ENCODE measurements at regions of chr12 and their contacts with region 1.

Region 1: GRCh38 chr12:108731105-108731865 is at the start of gene CORO1C:
- H3K4me3 Mint-ChIP-seq: peak within 1 kb of the TSS; percentile 92
- H3K27ac Mint-ChIP-seq: peak within 1 kb of the TSS; percentile 97
- H3K4me1 Mint-ChIP-seq: peaks cover 61% of the 10 kb centered on the region
- H3K27me3 Mint-ChIP-seq: no peaks in the 10 kb centered on the region

Region 2: DNA sequence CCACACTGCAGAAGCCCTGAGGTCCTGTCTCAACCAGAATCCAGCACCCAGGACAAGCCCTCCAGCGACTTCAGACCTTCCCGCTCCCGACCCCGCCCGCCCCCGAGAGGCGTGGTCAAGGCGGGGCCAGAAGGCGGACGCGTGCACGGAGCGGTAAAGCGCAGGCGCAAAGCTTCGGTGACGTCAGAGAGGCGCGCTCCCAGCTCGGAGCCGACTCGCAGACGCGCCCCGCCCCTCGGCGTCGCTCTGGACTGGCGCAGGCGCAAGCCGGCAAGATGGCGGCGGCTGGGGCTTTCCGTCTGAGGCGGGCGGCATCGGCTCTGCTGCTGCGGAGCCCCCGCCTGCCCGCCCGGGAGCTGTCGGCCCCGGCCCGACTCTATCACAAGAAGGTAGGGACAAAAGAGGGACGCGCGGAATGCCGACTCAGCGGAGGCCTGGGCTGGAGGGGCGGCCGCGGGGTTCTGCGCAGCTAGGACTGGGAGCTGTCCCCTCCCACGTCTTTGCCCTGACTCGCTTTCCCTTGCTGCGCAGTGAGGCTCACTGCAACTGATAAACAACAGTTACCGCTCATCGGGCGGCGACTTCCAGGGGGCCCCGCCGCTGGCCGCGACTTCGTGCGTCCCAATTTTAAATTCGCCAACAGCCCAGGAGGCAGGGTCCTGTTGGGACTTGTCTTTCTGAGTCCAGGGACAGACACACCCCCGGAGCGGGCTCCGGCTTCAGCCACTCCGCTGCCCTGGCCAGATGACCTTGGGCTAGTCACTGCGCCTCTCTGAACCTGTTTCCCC is 168.7 kb before region 1 on chr12 and contains the start of gene ISCU:
- intact Hi-C with region 1: loop called (anchors 5 kb)
- H3K4me3 Mint-ChIP-seq: peak within 1 kb of the TSS; percentile 100
- H3K27ac Mint-ChIP-seq: peak within 1 kb of the TSS; percentile 94
- H3K4me1 Mint-ChIP-seq: peaks cover 59% of the 10 kb centered on the region
- H3K27me3 Mint-ChIP-seq: no peaks in the 10 kb centered on the region

Region 3: GRCh38 chr12:108640802-108641445 is 90.4 kb before region 1 on chr12:
- intact Hi-C with region 1: no loop called
- H3K4me3 Mint-ChIP-seq: no peak overlapping the region
- H3K27ac Mint-ChIP-seq: peak overlapping the region; percentile 95
- H3K4me1 Mint-ChIP-seq: peaks cover 90% of the 10 kb centered on the region
- H3K27me3 Mint-ChIP-seq: no peaks in the 10 kb centered on the region

Region 4: DNA sequence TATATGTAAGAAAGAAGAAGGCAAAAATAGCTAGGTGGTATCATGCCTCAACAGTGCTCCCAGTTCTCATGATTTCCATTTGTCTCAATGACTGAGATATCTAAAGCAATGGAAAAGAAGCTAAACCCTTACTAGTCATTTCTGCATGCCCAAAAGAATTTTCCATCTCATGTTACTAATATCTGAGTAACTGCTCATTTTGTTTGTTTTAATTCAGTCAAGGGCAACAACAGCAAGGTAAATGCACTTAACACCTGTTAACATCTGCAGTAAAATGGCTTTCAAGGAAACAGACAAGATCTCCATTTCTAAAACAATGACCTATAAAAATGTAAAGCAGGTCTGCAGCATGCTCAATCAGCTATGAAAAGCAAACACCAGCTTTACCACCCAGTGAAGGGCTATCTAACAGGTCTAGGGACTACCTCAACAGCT is 78.2 kb before region 1 on chr12:
- intact Hi-C with region 1: no loop called
- H3K4me3 Mint-ChIP-seq: no peak overlapping the region
- H3K27ac Mint-ChIP-seq: peak overlapping the region; percentile 50
- H3K4me1 Mint-ChIP-seq: peaks cover 27% of the 10 kb centered on the region
- H3K27me3 Mint-ChIP-seq: no peaks in the 10 kb centered on the region

Region 5: DNA sequence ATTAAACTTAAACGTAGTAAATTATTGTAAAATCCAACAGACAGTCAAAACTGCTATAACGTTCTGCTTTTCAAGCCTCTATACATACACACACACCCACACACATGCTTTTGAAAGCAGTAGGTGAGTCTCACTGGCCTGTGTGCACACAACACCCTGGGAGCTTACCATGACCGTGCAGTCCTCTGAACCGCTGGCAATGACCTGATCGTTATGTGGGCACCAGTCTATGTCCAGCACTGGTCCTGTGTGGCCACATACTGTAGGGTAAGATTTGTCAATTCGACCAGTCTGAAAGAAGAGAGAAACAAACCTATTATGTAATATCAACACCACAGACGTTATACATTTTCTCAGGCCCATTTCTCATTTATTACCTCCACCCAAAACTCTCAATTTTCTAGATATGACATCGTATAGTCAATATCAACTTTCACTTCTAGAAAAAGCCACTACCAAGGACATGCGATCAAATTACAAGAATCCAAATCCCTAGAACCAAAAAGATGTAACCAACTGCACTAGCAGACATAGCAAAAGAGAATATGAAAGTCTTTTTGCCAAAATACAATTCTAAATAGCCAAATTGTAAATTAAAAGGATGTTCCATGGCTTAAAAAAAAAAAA is 53.1 kb before region 1 on chr12:
- intact Hi-C with region 1: no loop called
- H3K4me3 Mint-ChIP-seq: no peak overlapping the region
- H3K27ac Mint-ChIP-seq: no peak overlapping the region
- H3K4me1 Mint-ChIP-seq: peaks cover 20% of the 10 kb centered on the region
- H3K27me3 Mint-ChIP-seq: no peaks in the 10 kb centered on the region

Region 6: GRCh38 chr12:108691175-108691997 is 39.9 kb before region 1 on chr12:
- intact Hi-C with region 1: loop called (anchors 2 kb)
- H3K4me3 Mint-ChIP-seq: peak overlapping the region; percentile 65
- H3K27ac Mint-ChIP-seq: peak overlapping the region; percentile 95
- H3K4me1 Mint-ChIP-seq: peaks cover 83% of the 10 kb centered on the region
- H3K27me3 Mint-ChIP-seq: no peaks in the 10 kb centered on the region

Region 7: DNA sequence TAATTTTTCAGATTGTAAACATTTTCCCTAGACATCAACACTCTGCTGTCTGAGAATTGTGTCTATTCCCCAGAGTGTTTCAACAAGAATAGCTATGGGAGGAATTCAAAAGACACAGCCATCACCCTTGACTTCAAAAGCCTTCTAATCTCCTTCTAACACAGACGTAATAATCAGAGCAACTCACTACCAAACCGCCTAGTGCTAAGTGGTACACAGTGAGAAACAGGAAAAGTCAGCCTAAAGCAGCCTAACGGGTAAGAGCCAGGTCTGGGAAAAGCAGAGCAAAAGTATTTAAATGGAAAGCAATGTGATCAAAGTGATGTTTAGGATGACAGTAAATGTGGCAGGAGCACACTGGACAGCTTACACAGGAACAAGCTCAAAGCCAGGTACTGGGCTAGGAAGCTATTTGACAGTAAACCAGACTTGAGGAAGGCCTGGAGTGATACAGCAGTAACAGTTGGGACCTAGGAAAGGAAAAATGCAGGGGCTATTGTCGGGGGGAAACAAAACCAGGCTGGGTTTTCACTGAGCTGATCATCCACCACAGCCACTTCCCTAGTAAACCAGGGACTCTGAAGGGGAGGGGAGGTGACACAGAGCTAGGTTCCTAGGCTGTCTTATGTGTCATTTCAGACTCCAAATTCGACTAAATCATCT is 29.4 kb before region 1 on chr12:
- intact Hi-C with region 1: no loop called
- H3K4me3 Mint-ChIP-seq: peak overlapping the region; percentile 10
- H3K27ac Mint-ChIP-seq: peak overlapping the region; percentile 33
- H3K4me1 Mint-ChIP-seq: peaks cover 75% of the 10 kb centered on the region
- H3K27me3 Mint-ChIP-seq: no peaks in the 10 kb centered on the region

Region 8: DNA sequence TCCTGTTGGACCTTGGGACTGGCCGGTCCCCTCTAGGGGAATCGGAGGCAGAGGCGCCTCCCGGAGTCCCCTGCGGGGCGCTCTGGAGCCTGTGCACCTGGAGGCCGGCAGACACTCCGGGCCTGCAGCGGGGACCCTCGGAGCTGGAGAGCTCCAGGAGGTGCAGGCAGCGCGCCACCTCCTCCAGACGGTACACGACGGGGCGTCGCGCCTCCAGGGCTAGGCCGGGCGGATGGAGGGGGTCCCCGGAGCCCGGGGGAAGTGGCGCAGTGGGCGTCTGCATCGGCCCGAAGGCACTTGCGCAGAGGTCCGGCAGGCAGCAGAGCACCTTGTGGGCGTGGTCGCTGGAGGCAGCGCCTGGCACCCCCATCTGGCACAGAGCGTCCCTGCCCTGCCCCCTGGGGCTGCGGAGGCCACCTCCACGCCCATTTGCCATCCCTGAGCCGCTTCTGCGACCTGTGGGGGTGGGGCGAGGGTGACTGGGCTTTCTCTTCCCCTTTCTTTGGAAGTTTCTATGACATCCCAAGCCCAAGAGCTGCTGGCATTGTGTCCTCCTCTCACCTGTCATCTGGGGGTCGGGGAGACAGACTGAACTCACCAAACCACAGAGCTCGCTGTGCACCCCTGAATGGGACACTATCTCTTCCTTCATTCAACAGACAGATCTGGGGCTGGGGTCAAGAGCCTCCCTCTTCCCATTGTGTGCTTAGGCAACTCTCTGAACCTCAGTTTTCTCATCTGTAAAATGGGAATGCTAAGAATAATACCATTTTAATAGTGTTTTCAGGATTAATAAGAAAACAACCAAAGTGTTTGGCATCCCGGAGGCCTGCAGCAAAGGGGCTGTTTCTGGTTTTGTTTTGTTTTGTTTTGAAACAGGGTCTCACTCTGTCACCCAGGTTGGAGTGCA is 37.6 kb after region 1 on chr12:
- intact Hi-C with region 1: loop called (anchors 5 kb)
- H3K4me3 Mint-ChIP-seq: peak overlapping the region; percentile 48
- H3K27ac Mint-ChIP-seq: no peak overlapping the region
- H3K4me1 Mint-ChIP-seq: peaks cover 30% of the 10 kb centered on the region
- H3K27me3 Mint-ChIP-seq: peaks cover 4% of the 10 kb centered on the region

Region 9: GRCh38 chr12:108850854-108851573 is 119.7 kb after region 1 on chr12:
- intact Hi-C with region 1: loop called (anchors 5 kb)
- H3K4me3 Mint-ChIP-seq: peak overlapping the region; percentile 13
- H3K27ac Mint-ChIP-seq: peak overlapping the region; percentile 83
- H3K4me1 Mint-ChIP-seq: peaks cover 80% of the 10 kb centered on the region
- H3K27me3 Mint-ChIP-seq: no peaks in the 10 kb centered on the region

Measured in dendritic cell treated with granulocyte-macrophage colony-stimulating factor and Interleukin-4, amounts not matched to agents 40 ng/mL and 50 ng/mL, for 4 days (primary cell).